ENCODE measurements at regions of chr2 and their contacts with region 1.

Region 1: DNA sequence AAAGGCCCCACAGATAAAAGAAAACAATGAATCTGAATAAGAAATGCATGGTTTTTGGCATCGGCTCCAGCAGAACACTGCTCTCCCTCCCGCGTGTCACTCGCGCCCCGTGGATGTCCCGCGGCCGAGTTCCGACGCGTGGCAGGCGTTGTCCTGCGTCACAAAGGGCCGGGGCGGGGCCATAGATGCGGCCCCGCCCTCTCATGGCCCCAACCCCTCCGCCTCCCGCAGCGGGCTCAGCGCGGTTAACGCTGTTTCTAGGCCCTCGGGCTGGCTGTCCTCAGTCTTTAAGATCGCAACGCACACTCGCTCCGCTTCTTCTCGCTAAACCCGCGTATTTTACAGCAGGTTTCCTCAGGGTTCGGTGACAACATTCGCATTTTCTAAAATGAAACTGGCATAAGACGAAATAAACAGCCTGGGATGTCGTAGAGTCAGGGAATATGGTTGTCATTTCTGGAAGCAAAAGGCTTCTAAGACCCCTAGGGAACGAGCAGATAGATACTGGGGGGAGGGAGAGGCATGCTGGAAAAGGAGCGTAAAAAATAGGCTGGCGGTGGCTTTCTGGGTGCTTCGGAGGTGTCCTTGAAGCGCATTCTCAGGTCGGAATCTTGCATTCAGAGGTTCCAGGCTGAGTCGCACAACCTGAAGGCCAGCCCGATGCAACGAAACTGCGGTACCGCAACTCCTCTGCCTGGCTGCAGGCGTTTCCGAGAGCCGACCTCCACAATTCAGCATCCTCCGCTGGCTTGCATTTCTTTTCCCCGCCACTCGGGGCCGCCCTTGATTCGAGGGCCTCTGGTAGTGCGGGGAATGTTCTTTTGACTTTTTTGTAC is at the start of gene FKBP7:
- DNase-seq: peak; percentile 80
- ATAC-seq: peak; percentile 57
- H3K4me3 Mint-ChIP-seq: peak within 1 kb of the TSS; percentile 94
- H3K27ac Mint-ChIP-seq: peak within 1 kb of the TSS; percentile 99
- H3K4me1 Mint-ChIP-seq: peaks cover 28% of the 10 kb centered on the region
- H3K27me3 Mint-ChIP-seq: no peaks in the 10 kb centered on the region; the same call in 1 of the 2 replicates
- CTCF ChIP-seq: no peak
- total RNA-seq, gene FKBP7: 3.2 to 6.2 TPM (median 5.6 TPM) in 3 replicates

Region 2: GRCh38 chr2:178331474-178332432 is 146.9 kb before region 1 on chr2:
- CTCF ChIA-PET with region 1: no interaction called
- POLR2A ChIA-PET with region 1: no interaction called
- DNase-seq: no peak
- ATAC-seq: no peak
- H3K4me3 Mint-ChIP-seq: no peak overlapping the region
- H3K27ac Mint-ChIP-seq: no peak overlapping the region
- H3K4me1 Mint-ChIP-seq: no peaks in the 10 kb centered on the region
- H3K27me3 Mint-ChIP-seq: no peaks in the 10 kb centered on the region
- CTCF ChIP-seq: no peak

Region 3: GRCh38 chr2:178450774-178451525 is 27.7 kb before region 1 on chr2 and contains the starts of genes PJVK and PRKRA:
- CTCF ChIA-PET with region 1: interaction called, 14 read pairs
- POLR2A ChIA-PET with region 1: interaction called, 6 read pairs
- DNase-seq: peak; percentile 96
- ATAC-seq: peak; percentile 93
- H3K4me3 Mint-ChIP-seq: peak within 1 kb of the TSS; percentile 85
- H3K27ac Mint-ChIP-seq: peak within 1 kb of the TSS; percentile 100
- H3K4me1 Mint-ChIP-seq: peaks cover 20% of the 10 kb centered on the region
- H3K27me3 Mint-ChIP-seq: no peaks in the 10 kb centered on the region
- CTCF ChIP-seq: no peak
- total RNA-seq, gene PJVK: 2.5 to 6.8 TPM (median 4.4 TPM) in 3 replicates
- total RNA-seq, gene PRKRA: 55.4 to 57.6 TPM (median 55.4 TPM) in 3 replicates

Region 4: DNA sequence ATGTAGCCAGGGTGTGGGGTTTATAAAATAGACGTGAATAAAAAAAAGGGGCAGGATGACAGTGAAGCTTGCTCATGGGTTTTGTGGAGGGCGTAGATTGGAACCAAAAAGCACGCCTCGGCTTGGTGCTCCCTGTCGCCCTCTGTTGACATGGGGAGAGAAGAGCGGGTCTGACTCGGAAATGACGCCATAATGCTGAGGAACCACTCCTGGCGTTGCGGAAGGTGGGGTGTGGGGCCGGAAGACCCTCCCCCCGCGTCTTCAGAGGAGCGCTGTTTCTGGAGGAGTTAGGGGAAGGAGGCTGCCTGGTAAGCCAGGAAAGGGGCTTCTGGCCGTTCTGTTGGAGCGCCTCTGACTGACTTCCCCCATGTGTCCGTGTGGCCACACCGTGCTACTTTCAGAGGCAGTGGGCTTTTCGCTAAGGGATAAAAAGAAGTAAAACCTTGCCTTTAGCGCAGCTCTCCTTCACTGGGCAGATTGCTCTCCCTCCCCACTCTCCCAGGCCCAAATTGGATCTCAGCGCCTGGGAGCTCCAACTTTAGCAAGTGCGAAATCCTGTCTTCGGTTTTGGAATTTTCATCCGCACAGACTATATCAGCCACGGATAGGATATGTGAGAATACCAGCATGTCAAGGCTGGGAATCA is 44.4 kb after region 1 on chr2:
- CTCF ChIA-PET with region 1: interaction called, 11 read pairs
- POLR2A ChIA-PET with region 1: interaction called, 6 read pairs
- DNase-seq: peak; percentile 85
- ATAC-seq: peak; percentile 99
- H3K4me3 Mint-ChIP-seq: peak overlapping the region; percentile 92
- H3K27ac Mint-ChIP-seq: peak overlapping the region; percentile 91
- H3K4me1 Mint-ChIP-seq: peaks cover 5% of the 10 kb centered on the region
- H3K27me3 Mint-ChIP-seq: no peaks in the 10 kb centered on the region
- CTCF ChIP-seq: peak; percentile 62